ENCODE measurements at regions of chr5 and their contacts with region 1.

Region 1: GRCh38 chr5:95646554-95647431 is at the start of gene RFESD:
- DNase-seq: peak; percentile 94
- H3K4me3 Mint-ChIP-seq: peak within 1 kb of the TSS; percentile 71
- H3K27ac Mint-ChIP-seq: peak within 1 kb of the TSS; percentile 76
- H3K4me1 Mint-ChIP-seq: peaks cover 30% of the 10 kb centered on the region
- H3K27me3 Mint-ChIP-seq: no peaks in the 10 kb centered on the region
- total RNA-seq, gene RFESD: 0.94 and 2.9 TPM in 2 replicates

Region 2: GRCh38 chr5:95591490-95591901 is 55.3 kb before region 1 on chr5:
- intact Hi-C with region 1: loop called (anchors 1 kb)
- DNase-seq: no peak
- H3K4me3 Mint-ChIP-seq: no peak overlapping the region
- H3K27ac Mint-ChIP-seq: peak overlapping the region; percentile 65
- H3K4me1 Mint-ChIP-seq: peaks cover 30% of the 10 kb centered on the region
- H3K27me3 Mint-ChIP-seq: no peaks in the 10 kb centered on the region

Region 3: DNA sequence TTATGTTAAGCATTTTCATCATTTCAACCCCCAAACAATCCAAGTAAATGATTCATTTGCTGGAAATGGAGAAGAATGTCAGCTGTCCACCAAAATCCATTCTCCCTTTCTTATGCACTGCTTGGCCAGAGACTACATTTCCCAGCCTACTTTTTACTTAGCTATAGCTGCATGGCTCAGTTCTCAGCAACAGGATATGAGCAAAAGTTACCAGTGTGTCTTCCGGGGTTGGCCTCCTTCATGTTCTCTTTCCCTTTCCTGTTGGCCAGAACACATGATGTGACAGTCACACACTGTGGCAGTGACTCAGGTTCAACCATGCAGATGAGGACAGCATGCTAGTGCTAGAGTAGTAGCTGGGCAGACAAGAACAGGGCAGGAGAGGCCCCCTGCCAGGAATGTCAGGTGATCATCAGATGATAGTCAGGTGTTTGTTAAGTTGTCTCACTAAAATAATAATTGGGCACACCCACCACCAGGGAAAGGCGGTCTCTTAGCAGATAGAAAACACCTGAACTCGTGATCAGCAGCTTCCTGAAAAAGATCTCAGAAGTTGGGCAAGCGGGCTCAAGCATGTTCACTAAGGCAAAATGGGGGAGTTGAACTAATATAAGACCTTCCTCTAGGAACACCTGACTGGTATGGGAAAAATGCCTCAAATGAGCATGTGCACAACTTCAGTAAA is 14.7 kb before region 1 on chr5:
- intact Hi-C with region 1: loop called (anchors 1 kb)
- DNase-seq: peak; percentile 61
- H3K4me3 Mint-ChIP-seq: no peak overlapping the region
- H3K27ac Mint-ChIP-seq: peak overlapping the region; percentile 81
- H3K4me1 Mint-ChIP-seq: peaks cover 13% of the 10 kb centered on the region
- H3K27me3 Mint-ChIP-seq: peaks cover 6% of the 10 kb centered on the region

Region 4: DNA sequence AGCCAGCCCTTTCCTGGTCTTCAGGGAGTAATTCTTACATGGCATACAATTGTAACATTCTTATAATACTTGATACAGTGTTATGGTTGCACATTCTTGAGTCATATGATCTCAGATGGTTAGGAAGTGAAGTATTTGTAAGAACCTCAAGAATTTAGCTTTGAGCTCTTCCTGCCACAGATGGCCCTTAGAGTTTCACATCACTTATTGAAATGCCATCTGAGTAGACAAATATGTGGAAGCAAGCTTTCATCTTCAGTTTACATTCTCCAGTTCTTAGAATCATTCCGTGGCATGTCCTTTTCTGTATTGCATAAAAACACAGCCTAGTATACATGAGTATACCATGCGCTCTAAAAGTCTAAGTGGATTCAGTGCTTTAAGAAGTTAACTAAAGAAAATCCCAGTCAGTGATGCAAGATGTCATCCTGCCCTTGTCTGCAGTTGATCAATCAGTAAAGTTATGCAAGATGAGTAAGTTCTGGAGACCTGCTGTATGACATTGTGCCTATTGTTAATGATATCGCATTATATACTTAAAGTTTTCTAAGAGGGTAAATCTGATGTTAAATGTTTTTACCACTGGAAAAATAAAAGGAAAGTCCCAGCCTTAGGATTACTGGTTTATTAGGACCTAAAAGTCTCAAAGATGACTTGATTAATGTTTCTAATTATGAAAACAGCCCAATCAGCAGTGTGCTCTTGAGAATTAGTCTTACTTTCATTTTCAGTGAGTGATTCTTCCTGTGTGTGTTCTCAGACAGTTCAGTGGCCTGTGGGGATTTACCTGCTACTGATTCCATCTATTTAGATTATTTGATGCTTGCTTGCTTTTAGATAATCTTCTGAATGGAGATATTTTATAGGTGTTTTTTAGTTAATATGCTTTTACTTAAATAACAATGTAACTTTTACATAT is 113.7 kb after region 1 on chr5:
- intact Hi-C with region 1: loop called (anchors 1 kb)
- DNase-seq: no peak
- H3K4me3 Mint-ChIP-seq: peak overlapping the region; percentile 51
- H3K27ac Mint-ChIP-seq: peak overlapping the region; percentile 58
- H3K4me1 Mint-ChIP-seq: peaks cover 28% of the 10 kb centered on the region
- H3K27me3 Mint-ChIP-seq: peaks cover 58% of the 10 kb centered on the region

Region 5: DNA sequence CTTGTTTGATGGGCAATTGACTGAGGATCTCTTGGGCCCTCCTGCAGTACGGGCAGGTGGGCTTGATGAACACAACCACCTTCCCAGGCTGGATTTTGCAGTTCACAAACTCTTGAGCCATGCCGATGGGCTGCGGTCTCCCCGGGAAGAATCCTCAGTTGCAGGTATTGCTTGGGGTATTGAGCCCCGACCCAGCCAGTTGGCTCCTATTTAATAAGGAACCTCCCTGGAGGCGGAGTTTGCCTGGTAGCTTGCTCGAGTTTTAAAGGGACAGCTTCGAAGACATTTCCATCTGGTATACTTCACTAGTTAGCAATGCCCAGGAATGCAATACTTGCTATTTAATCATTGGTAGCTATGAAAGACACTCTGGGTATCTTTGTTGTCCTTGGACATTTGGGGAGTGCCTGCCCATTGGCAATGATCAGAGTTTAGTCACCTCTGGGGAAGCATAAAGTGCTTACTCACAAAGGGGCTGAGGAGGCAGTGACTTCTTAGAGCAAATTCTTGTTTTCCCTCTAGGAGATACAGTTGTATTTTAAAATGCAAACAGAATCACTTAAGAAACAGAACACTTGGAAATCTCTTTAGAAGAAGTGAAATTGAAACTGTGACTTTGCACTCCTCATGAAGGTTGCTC is 175.9 kb after region 1 on chr5 and contains the start of gene GLRX:
- intact Hi-C with region 1: loop called (anchors 5 kb)
- DNase-seq: peak; percentile 56
- H3K4me3 Mint-ChIP-seq: peak within 1 kb of the TSS; percentile 91
- H3K27ac Mint-ChIP-seq: peak within 1 kb of the TSS; percentile 80
- H3K4me1 Mint-ChIP-seq: peaks cover 55% of the 10 kb centered on the region
- H3K27me3 Mint-ChIP-seq: no peaks in the 10 kb centered on the region
- total RNA-seq, gene GLRX: 14.9 and 18.5 TPM in 2 replicates

Region 6: GRCh38 chr5:95961617-95962474 is 315.1 kb after region 1 on chr5 and contains the start of gene ELL2:
- intact Hi-C with region 1: loop called (anchors 10 kb)
- DNase-seq: peak; percentile 94
- H3K4me3 Mint-ChIP-seq: peak within 1 kb of the TSS; percentile 92
- H3K27ac Mint-ChIP-seq: peak within 1 kb of the TSS; percentile 98
- H3K4me1 Mint-ChIP-seq: peaks cover 51% of the 10 kb centered on the region
- H3K27me3 Mint-ChIP-seq: no peaks in the 10 kb centered on the region
- total RNA-seq, gene ELL2: 124 and 135 TPM in 2 replicates

Region 7: DNA sequence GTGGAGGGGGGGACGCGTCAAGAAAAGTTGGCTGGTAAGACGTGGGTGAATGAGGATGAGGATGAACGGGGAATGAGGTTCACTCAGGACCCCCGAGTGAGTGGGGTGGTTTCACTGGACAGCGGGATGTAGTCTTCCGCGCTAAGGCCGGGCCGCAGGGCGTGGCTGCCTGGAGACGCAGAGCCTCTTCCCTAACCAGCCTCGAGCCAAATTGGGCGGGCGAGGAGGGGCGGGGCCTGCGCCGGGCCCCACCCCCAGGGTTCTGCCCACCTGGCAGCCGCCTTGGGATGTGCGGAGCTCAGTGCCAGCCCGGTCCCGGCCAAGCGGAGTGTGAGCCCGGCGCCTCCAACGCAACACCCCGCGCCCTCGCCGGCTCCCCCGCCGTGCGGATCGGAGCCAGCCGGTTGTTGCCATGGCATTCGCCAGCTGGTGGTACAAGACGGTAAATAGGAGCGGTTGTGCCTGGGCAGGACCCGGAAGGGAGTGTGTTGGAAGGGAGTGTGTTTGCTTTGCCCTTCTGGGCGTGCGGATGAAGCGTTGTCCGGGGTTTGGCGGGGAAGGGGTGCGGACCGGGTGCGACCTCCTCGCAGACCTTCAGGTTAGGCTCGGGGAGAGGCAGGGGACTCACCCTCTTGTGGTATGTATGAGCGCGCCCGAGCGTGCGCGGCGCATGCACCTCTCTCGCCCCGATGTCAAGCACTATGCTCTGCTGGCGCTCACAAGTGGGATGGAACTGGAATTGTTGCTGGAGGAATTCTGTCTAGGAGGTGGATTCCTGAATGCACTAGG is 1016.1 kb after region 1 on chr5:
- intact Hi-C with region 1: loop called (anchors 5 kb)
- DNase-seq: peak; percentile 82
- H3K4me3 Mint-ChIP-seq: peak overlapping the region; percentile 90
- H3K27ac Mint-ChIP-seq: peak overlapping the region; percentile 96
- H3K4me1 Mint-ChIP-seq: peaks cover 55% of the 10 kb centered on the region
- H3K27me3 Mint-ChIP-seq: peaks cover 26% of the 10 kb centered on the region